Ovary (tissue), 10 donors: ENCODE measurements at regions of chr3 and their contacts with region 1.

Region 1: DNA sequence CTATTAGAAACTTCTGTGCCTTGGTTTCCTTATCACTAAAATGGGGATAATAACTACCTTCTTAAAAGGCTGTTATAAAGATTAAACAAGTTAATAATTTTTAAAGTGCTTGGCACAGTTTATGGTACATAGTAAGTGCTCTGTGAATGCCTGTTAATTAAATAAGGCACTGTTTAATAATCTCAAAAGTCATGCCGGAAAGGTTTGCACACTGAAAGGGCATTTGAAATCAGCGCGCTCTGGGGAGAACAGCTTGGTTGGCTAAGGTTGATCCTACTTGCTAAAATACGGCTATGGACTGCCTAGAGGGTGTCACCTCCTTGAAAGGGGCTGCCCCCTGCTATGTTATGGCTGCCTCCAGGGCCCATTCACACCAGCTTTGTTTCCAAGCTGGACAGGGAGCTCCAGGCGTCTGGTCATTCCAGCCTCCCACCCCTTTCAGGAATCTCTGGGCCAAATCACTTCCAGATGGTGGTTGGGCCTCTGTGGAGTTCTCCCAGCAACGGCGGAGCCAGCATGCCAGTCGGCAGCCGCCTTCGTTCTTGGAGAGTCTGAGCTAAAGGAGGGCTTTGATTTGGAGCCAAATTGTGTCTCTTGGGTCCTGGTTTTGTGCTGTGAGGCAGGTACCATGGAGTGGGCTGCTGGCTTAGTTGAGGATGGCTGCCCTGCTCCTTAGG is 5.9 kb downstream of the FLNB start:
- DNase-seq: peak; percentile 53 to 77 (median 66)
- H3K4me3 ChIP-seq: no peak overlapping the region
- H3K27ac ChIP-seq: peak overlapping the region in 1 of 2 donors; percentile 4
- H3K4me1 ChIP-seq: peaks cover 21% of the 10 kb centered on the region
- H3K27me3 ChIP-seq: no peaks in the 10 kb centered on the region
- CTCF ChIP-seq: no peak
- EP300 ChIP-seq: no peak
- POLR2A ChIP-seq: no peak

Region 2: GRCh38 chr3:57877116-57877515 is 137.0 kb before region 1 on chr3:
- intact Hi-C with region 1: no loop called
- DNase-seq: no peak
- H3K4me3 ChIP-seq: no peak overlapping the region
- H3K27ac ChIP-seq: no peak overlapping the region
- H3K4me1 ChIP-seq: peaks cover 3% of the 10 kb centered on the region
- H3K27me3 ChIP-seq: no peaks in the 10 kb centered on the region
- CTCF ChIP-seq: no peak
- EP300 ChIP-seq: no peak
- POLR2A ChIP-seq: no peak

Region 3: GRCh38 chr3:58059349-58060321 is 45.5 kb after region 1 on chr3:
- intact Hi-C with region 1: loop called in 2 of 4 experiments (anchors 5 to 10 kb)
- DNase-seq: peak; percentile 67 to 81 (median 78)
- H3K4me3 ChIP-seq: no peak overlapping the region
- H3K27ac ChIP-seq: peak overlapping the region in 1 of 2 donors; percentile 77
- H3K4me1 ChIP-seq: peaks cover 14% of the 10 kb centered on the region
- H3K27me3 ChIP-seq: no peaks in the 10 kb centered on the region
- CTCF ChIP-seq: no peak
- EP300 ChIP-seq: peak; percentile 82
- POLR2A ChIP-seq: peak; percentile 41

Region 4: GRCh38 chr3:58073301-58074108 is 59.4 kb after region 1 on chr3:
- intact Hi-C with region 1: loop called in 2 of 4 experiments (anchors 10 kb)
- DNase-seq: no peak
- H3K4me3 ChIP-seq: no peak overlapping the region
- H3K27ac ChIP-seq: no peak overlapping the region
- H3K4me1 ChIP-seq: peaks cover 2% of the 10 kb centered on the region
- H3K27me3 ChIP-seq: no peaks in the 10 kb centered on the region
- CTCF ChIP-seq: no peak
- EP300 ChIP-seq: no peak
- POLR2A ChIP-seq: no peak

Region 5: DNA sequence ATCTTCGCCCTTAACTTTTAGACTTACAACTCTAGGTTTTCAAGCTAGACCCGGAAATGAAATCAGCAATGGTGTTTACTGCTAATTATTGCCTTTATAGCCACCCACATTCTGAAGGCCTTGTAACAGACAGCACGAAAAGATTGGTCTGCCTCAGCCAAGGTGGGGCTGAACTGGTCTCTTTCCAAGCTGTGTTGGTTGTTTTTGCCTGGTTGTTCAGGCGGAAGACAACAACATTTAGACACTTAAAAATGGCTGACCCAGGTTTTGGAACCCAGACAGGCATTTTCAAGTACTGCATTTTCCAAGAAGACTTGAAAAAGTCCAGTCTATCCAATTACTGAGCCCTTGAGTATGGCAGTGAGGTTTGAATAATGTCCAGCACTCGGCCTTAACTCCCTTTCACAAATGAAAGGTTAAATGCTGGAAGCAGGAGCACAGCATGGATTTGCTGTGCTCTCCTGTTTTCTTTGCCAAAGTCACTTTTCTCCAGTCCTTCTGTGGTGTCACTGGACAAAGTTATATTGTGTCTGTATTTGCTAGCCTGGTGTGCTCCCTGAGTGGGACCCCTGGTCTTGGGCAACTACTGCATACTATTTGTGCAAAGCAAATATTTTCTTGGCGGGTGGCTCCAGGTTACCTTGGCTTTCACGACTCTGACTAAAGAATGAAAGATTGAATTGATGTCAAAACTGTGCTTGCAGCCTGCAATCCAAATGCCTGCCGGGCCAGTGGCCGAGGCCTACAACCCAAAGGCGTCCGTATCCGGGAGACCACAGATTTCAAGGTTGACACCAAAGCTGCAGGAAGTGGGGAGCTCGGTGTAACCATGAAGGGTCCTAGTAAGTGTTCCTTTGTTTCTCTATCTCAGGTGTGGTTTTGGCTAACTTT is 87.6 kb after region 1 on chr3:
- intact Hi-C with region 1: loop called in 2 of 4 experiments (anchors 10 kb)
- DNase-seq: no peak
- H3K4me3 ChIP-seq: no peak overlapping the region
- H3K27ac ChIP-seq: peak overlapping the region; percentile 27 to 85
- H3K4me1 ChIP-seq: peaks cover 17% of the 10 kb centered on the region
- H3K27me3 ChIP-seq: no peaks in the 10 kb centered on the region
- CTCF ChIP-seq: no peak
- EP300 ChIP-seq: no peak
- POLR2A ChIP-seq: no peak

Region 6: DNA sequence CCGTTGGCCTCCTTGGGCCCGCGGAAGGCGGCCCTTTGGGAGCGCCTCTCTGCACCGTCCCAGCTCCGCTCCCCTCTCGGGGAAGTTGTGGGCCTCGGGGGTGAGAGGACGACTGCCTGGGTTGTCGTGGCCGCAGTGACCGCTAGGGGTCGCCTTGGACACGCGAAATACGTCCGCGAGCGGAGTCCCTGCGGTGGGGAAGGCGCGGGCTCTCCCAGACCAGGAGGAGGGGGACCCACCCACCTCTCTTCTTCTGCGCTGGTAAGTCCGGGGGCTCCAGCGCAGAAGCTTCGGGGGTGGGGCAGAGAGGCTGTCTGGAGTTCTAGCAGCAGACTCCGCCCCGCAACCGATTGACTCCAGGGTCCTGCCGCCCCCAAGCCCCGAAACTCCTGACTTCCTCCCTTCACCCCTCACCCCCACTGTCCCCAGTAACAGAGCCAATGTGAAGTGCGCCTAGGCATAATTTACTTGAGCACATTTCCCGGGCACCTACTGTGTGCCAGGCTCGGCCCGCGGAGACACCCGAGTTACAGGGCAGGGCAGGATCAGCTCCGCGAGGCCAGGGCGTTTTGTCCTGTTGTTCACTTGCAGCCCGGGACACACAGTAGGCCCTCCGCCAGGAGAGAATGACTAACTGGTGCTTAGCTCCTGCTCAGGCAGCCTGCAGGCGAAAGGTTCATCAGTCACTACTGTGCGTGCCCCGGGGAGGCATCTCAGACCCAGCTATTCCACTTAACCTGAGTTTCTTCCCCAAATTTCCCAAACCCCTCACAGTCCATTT is 163.8 kb after region 1 on chr3:
- intact Hi-C with region 1: loop called in 2 of 4 experiments (anchors 5 kb)
- DNase-seq: peak; percentile 90 to 96 (median 95)
- H3K4me3 ChIP-seq: peak overlapping the region; percentile 44
- H3K27ac ChIP-seq: no peak overlapping the region
- H3K4me1 ChIP-seq: peaks cover 10% of the 10 kb centered on the region
- H3K27me3 ChIP-seq: no peaks in the 10 kb centered on the region
- CTCF ChIP-seq: peak; percentile 88 to 94 (median 92)
- EP300 ChIP-seq: no peak
- POLR2A ChIP-seq: no peak